Cardiac septum (tissue), 1 donor: ENCODE measurements at regions of chr2 and their contacts with region 1.

Region 1: DNA sequence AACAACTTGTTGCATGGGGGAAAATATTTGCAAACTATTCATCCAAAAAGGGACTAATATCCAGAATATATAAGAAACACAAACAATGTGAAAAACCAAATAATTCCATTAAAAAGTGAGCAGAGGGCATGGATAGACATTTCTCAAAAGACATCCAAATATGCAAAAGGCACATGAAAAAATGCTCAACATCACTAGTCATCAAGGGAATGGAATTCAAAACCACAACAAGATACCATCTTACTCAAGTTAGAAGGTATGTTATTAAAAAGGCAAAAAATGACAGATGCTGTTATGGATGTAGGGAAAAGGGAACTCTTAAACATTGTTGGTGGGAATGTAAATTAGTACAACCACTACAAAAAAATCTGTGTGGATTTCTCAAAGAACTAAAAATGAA is 396.5 kb downstream of the CCDC85A start:
- DNase-seq: no peak

Region 2: DNA sequence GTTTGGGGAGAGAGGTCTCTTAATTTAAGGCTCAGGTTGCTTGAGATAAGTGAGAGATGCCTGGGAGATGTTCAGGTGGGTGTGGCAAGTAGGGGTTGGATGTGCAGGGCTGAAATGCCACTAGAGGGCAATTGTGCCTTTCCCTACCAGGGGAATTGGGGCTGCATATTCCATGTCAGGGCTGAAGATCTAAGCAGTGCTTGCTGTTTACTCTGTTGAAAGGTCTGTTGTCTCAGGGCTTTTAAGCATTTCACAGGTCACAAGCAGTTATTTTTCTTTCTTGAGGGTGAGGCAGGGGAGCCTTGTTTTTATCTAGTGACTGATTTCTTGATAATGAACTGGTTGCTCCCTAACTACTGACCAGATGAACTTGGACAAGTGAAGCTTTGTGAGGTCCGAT is 388.6 kb before region 1 on chr2:
- intact Hi-C with region 1: loop called (anchors 10 kb)
- DNase-seq: no peak

Region 3: DNA sequence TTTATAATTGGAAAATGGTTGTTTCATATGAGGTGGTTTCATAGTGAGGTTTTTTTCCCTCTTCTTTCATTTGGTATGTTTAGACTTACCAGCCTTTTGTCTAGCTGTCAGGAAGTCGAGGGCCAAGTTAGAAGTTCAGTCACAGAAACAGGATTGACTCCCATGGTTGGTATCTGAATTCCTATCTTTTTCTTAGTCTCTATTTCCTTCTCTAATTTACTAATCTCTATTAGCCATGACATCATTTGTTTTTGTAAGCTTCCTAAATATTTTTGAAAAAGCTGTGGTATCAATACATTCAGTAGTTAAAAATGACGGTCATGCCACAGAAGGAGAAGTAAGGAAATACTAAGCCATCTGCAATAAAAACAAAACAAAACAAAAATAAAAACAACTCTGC is 189.6 kb before region 1 on chr2:
- intact Hi-C with region 1: no loop called
- DNase-seq: no peak

Region 4: DNA sequence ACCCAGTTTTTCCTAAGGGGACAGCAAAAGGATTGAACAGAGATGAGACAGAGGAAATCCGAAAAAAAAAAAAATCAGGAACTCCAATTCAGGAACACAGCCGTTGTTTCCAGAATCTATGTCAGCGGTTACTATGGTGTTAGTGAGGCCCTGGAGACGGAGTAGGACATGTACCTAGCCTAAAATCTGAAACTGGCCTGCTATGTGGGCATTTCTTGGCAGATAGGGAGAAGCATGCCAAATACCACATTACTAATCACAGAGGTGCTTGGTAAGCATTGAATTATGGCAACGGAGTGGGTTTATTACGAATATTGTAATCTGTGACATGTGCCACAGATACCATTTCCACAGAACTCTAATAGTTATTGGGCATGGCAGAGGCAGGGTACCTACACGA is 134.2 kb after region 1 on chr2:
- intact Hi-C with region 1: no loop called
- DNase-seq: no peak